ENCODE measurements at regions of chr3 and their contacts with region 1.

Region 1: DNA sequence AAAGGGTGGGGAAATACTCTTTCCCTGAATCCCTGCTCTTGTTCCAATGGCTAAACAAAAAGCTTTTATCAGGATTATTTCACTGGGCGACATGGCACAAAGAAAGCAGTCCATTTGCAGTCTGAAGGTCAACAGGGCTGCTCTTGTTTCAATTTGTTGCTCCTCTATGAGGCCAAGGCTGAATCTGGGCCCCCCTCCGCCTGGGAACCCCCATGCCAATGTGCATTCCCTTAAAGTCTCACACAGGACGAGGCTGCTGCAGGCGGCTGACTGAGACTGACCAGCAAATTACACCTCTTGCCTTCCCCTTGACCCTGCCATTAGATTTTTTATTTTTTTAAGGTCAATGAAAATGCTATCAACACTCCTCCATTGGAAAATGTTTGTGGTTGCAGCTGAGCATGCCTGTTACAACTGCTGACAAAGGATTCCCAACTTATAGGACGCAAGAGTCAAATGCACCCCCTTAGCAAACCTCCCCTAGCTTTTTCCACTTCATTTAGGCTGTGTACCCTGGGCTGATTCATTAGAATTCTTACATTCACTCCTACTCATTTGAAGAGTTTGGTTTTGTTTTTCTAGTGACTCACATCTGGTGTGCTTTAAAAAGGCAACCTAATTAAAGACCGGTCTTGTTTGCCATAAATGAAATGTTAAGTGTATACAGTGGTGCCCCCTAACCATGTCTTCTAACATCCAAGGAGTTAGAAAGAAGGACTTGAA is 60.8 kb upstream of the ARHGEF3 start:
- DNase-seq: peak; percentile 39
- H3K4me3 Mint-ChIP-seq: peak overlapping the region; percentile 32
- H3K27ac Mint-ChIP-seq: peak overlapping the region; percentile 81
- H3K4me1 Mint-ChIP-seq: peaks cover 73% of the 10 kb centered on the region
- H3K27me3 Mint-ChIP-seq: no peaks in the 10 kb centered on the region

Region 2: DNA sequence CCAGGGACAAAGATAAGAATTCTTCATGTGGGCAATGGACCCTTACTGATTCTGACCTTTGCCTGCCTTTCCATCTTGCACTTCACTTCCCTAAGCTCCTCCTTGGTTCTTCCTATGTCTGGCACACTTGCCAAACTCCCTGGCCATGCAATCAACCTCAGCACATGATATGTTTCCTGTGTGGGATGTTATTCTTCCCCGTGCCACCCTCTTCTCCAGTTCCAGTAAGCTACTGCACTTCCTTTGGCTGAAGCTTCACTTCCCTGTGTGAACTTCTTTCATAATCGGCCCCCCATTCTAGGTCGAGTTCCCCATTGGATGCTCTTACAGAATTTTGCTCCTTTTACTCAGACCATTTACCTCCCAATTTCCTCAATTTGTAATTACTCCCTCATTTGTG is 168.8 kb before region 1 on chr3:
- CTCF ChIA-PET with region 1: no interaction called
- POLR2A ChIA-PET with region 1: no interaction called
- intact Hi-C with region 1: loop called (anchors 5 kb)
- DNase-seq: no peak
- H3K4me3 Mint-ChIP-seq: no peak overlapping the region
- H3K27ac Mint-ChIP-seq: no peak overlapping the region
- H3K4me1 Mint-ChIP-seq: peaks cover 42% of the 10 kb centered on the region
- H3K27me3 Mint-ChIP-seq: no peaks in the 10 kb centered on the region

Region 3: GRCh38 chr3:56753206-56753820 is 109.2 kb before region 1 on chr3:
- CTCF ChIA-PET with region 1: no interaction called
- POLR2A ChIA-PET with region 1: no interaction called
- intact Hi-C with region 1: loop called (anchors 5 kb)
- DNase-seq: peak; percentile 73
- H3K4me3 Mint-ChIP-seq: peak overlapping the region; percentile 18
- H3K27ac Mint-ChIP-seq: peak overlapping the region; percentile 23
- H3K4me1 Mint-ChIP-seq: peaks cover 57% of the 10 kb centered on the region
- H3K27me3 Mint-ChIP-seq: no peaks in the 10 kb centered on the region

Region 4: DNA sequence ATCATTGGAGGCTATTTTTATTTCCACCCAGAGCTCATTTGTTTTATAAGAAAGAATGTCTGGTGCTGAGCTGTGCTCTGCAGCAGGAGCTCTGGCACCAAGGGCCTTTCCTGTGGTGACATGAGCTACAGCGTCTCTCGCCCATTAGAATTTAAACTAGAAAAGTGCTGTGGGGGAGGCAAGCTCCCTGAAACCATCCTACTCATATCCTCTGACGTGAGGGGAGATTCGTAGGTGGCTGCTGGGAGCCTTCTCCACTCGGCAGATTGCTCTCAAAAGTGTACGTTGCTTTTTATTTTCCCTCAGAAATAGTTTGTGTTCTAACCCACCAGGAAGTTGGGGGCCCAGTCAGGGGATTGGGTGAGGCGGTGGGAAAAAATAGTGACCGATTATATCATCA is 15.6 kb after region 1 on chr3:
- CTCF ChIA-PET with region 1: interaction called, 10 read pairs
- POLR2A ChIA-PET with region 1: interaction called, 18 read pairs
- intact Hi-C with region 1: loop called (anchors 1 kb)
- DNase-seq: peak; percentile 79
- H3K4me3 Mint-ChIP-seq: peak overlapping the region; percentile 57
- H3K27ac Mint-ChIP-seq: peak overlapping the region; percentile 85
- H3K4me1 Mint-ChIP-seq: peaks cover 80% of the 10 kb centered on the region
- H3K27me3 Mint-ChIP-seq: no peaks in the 10 kb centered on the region

Region 5: GRCh38 chr3:56887402-56888025 is 25.0 kb after region 1 on chr3:
- CTCF ChIA-PET with region 1: interaction called, 3 read pairs
- POLR2A ChIA-PET with region 1: interaction called, 3 read pairs
- intact Hi-C with region 1: loop called (anchors 2 kb)
- DNase-seq: peak; percentile 63
- H3K4me3 Mint-ChIP-seq: peak overlapping the region; percentile 30
- H3K27ac Mint-ChIP-seq: peak overlapping the region; percentile 66
- H3K4me1 Mint-ChIP-seq: peaks cover 78% of the 10 kb centered on the region
- H3K27me3 Mint-ChIP-seq: no peaks in the 10 kb centered on the region

Measured in activated CD4-positive, alpha-beta memory T cell treated with anti-CD3 and anti-CD28 coated beads for 36 hours (primary cell).